ENCODE measurements at regions of chr17 and their contacts with region 1.

Region 1: DNA sequence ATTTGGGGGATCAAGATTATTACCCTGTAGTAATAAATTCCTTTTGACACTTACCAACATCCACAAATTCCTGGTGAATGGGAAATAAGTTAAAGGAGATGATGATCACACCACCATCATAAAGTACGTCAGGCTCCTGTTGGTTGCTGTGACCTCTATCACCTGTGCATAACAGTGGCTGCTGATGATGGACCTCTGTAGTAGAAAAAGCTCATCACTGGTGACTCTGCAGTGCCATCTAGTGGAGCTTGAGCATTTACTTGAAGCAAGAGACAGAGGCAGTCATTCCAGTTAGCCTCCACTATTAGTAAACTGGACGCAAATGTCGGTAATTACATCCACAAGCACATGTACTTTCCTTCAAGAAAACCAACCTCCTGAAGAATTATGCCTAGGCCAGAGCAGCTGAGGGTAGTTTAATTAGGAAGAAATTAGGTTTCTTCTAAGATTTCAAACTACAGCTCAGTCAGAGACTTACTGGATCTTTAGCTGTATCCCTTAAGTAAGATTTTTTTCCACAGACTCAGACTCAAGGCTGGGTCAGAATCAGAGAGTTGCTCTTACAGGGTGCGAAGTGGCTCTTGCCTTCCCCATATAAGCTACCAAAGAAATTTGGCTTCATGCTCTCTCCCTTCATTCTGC is 39.3 kb downstream of the CYB561 start:
- DNase-seq: peak; percentile 90
- H3K4me3 Mint-ChIP-seq: no peak overlapping the region
- H3K27ac Mint-ChIP-seq: no peak overlapping the region
- H3K4me1 Mint-ChIP-seq: peaks cover 2% of the 10 kb centered on the region
- H3K27me3 Mint-ChIP-seq: peaks cover 19% of the 10 kb centered on the region

Region 2: DNA sequence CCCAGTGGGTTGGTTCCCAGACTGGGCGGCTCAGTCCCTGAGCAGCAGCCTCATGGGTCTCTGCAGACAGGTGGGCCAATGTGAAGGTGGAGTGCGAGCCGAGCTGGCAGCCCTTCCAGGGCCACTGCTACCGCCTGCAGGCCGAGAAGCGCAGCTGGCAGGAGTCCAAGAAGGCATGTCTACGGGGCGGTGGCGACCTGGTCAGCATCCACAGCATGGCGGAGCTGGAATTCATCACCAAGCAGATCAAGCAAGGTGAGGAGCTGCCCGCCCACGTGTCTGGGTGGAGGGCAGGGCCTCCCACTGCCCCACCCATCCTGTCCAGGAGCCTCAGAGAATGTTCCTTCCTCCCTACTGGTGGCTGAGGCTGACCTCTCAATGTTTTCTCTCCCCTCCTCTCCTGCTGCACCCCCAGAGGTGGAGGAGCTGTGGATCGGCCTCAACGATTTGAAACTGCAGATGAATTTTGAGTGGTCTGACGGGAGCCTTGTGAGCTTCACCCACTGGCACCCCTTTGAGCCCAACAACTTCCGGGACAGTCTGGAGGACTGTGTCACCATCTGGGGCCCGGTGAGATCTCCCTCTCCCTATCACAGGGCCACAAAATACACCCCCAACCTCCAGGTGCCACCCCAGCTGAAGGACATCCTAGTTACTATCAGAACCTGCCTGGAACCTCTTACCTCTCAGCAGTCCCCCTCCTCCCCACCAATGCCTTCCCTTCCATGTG is 735.1 kb before region 1 on chr17:
- intact Hi-C with region 1: loop called (anchors 1 kb)
- DNase-seq: no peak
- H3K4me3 Mint-ChIP-seq: no peak overlapping the region
- H3K27ac Mint-ChIP-seq: no peak overlapping the region
- H3K4me1 Mint-ChIP-seq: no peaks in the 10 kb centered on the region
- H3K27me3 Mint-ChIP-seq: peaks cover 4% of the 10 kb centered on the region

Region 3: GRCh38 chr17:62703775-62704378 is 702.9 kb before region 1 on chr17:
- intact Hi-C with region 1: loop called (anchors 5 kb)
- DNase-seq: peak; percentile 91
- H3K4me3 Mint-ChIP-seq: peak overlapping the region; percentile 51
- H3K27ac Mint-ChIP-seq: no peak overlapping the region
- H3K4me1 Mint-ChIP-seq: peaks cover 4% of the 10 kb centered on the region
- H3K27me3 Mint-ChIP-seq: peaks cover 43% of the 10 kb centered on the region

Region 4: DNA sequence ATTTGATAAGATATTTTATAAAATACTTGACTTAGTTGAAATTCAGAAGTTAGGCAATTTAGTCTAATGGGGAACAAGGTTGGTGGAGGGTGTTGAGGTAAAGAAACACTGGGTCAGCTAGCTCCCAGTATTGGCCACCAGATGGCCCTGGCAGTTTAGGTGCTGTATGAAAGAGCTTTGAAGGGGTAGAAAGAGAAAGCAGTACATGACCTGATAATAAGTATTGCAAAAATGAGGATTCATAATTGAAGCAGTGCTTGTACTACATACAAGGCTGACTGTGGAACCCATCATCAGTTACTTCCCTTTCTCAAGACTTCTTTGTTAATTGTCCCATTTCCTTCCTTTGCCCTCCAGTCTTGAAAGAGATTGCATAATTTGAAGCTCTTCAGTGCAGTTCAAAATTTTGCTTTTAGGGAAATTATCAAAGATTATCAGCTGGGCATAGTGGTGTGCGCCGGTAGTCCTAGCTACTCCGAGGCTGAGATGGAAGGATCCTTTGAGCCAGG is 411.4 kb before region 1 on chr17:
- intact Hi-C with region 1: loop called (anchors 10 kb)
- DNase-seq: peak; percentile 60
- H3K4me3 Mint-ChIP-seq: no peak overlapping the region
- H3K27ac Mint-ChIP-seq: no peak overlapping the region
- H3K4me1 Mint-ChIP-seq: no peaks in the 10 kb centered on the region
- H3K27me3 Mint-ChIP-seq: no peaks in the 10 kb centered on the region

Region 5: DNA sequence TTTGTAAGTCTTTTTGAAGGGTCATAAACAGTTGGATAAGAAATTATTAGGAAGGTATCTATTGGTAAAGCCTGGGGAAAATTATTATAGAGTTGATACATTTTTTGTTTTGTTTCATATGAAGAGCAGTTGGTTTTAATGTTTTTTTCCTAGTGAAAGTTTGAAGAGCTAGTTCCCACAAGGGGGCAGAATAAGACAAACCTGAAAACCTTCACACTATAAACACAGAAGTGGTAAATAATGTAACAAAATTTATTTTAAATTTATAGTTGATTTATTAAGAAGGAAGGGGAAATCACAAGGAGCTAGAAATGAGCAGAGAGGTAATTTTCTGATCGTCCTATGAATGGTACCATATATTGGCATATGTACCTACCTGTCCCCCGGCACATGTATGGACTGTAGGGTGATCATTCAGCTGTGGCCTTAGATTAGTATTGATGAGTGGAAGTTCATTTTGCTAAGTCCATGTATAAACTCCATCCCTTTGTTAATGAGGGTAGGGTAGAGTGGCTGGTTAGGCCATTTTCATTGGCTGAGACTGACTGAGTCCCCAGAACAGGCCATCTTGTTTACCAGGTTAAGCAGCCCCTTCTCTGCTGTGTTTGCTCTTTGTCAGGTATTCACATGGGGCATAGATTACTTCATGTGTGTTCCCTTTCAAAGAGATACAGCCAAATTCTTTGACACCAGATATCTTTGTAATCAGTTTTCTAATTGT is 324.4 kb before region 1 on chr17:
- intact Hi-C with region 1: loop called (anchors 2 kb)
- DNase-seq: no peak
- H3K4me3 Mint-ChIP-seq: no peak overlapping the region
- H3K27ac Mint-ChIP-seq: no peak overlapping the region
- H3K4me1 Mint-ChIP-seq: no peaks in the 10 kb centered on the region
- H3K27me3 Mint-ChIP-seq: peaks cover 2% of the 10 kb centered on the region

Region 6: DNA sequence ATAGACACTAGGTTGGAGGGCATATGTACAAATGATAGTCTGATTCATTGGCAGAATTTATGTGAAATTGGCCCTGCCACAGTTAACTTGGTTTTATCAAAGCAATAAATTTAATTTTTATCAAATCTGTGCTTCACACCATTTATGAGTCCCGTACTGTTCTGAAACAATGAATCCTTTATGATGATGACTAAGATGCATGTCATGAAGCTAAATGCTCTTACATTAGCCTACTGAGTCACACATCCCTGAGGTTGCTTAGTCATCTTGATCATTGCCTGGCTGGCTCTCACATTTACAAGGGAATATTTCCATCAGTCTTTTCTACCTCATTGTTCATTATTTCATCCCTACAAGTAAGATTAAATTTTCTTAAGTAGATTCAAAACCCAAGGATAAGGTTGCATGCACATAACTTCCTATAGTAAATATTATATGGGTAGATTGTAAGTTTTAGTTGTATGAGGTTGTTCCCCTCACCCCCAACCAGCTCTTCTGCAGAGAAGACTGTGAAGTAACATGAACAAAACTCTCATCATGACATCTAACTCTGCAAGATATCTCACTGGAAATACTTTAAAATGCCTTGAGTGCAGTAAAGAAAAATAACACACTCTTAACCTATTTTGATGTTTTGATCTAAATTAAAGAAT is 131.4 kb before region 1 on chr17:
- intact Hi-C with region 1: loop called (anchors 10 kb)
- DNase-seq: no peak
- H3K4me3 Mint-ChIP-seq: no peak overlapping the region
- H3K27ac Mint-ChIP-seq: no peak overlapping the region
- H3K4me1 Mint-ChIP-seq: peaks cover 9% of the 10 kb centered on the region
- H3K27me3 Mint-ChIP-seq: peaks cover 4% of the 10 kb centered on the region